ENCODE measurements at regions of chr14 and their contacts with region 1.

Region 1: GRCh38 chr14:32252030-32252670 is 49.1 kb upstream of the RNU6-8 start:
- DNase-seq: peak; percentile 44
- H3K4me3 Mint-ChIP-seq: no peak overlapping the region
- H3K27ac Mint-ChIP-seq: no peak overlapping the region
- H3K4me1 Mint-ChIP-seq: no peaks in the 10 kb centered on the region
- H3K27me3 Mint-ChIP-seq: no peaks in the 10 kb centered on the region

Region 2: DNA sequence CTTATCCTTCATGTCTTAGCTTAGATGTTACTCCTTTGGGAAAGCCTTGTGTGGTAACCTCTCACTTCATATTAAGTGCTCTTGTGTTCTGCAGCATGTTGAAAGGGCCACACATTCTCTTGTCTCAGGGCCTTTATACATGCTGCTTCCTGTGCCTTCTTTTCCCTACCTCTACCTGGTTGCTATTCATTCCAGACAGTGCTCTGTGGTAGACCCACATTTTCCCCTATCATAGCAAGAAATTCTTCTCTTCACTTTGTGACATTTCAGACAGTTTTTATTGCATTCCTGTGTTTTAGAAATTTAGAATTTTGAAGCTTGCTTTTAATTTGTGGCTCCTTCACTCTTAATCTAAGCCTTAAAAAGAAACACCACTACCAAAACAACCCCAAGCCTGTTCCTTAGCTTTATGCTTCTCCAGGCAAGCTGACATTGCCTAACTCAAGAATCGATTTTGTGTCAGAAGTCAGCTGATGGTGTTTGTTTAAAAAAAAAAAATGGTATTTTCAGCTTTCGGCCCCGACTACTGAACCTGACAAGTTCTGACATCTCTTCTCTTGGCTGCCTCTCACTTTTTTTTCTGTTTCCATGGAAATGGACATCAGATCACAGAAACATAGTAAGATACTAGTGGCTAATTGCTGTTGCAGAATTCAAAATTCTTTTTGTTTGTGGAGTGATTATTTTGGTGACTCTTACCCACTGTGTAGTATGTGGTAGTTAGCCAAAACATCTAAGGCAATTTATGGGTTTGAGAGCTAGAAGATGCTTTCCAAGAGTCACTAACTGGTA is 534.7 kb before region 1 on chr14:
- CTCF ChIA-PET with region 1: no interaction called
- POLR2A ChIA-PET with region 1: no interaction called
- DNase-seq: no peak
- H3K4me3 Mint-ChIP-seq: no peak overlapping the region
- H3K27ac Mint-ChIP-seq: no peak overlapping the region
- H3K4me1 Mint-ChIP-seq: no peaks in the 10 kb centered on the region
- H3K27me3 Mint-ChIP-seq: no peaks in the 10 kb centered on the region

Region 3: DNA sequence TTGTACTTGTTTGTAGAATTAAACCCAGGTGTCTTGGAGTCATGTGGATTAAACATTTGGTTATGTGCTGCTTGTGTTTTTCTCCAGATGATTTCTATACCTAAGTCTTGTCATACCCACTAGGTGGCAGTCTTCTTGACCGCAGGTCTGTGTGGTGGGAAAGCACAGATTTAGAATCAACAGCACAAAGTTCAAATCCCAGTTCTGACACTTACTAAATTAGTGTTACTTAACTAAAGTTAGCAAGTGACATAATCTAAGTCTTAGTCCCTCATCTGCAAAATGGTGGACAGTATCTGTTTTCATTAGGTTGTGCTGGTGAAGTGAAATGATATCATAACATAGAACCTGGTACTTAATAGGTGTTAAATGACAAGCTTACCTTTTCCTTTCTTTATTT is 326.0 kb before region 1 on chr14:
- CTCF ChIA-PET with region 1: interaction called, 16 read pairs
- POLR2A ChIA-PET with region 1: no interaction called
- DNase-seq: peak; percentile 32
- H3K4me3 Mint-ChIP-seq: no peak overlapping the region
- H3K27ac Mint-ChIP-seq: no peak overlapping the region
- H3K4me1 Mint-ChIP-seq: peaks cover 15% of the 10 kb centered on the region
- H3K27me3 Mint-ChIP-seq: no peaks in the 10 kb centered on the region

Region 4: DNA sequence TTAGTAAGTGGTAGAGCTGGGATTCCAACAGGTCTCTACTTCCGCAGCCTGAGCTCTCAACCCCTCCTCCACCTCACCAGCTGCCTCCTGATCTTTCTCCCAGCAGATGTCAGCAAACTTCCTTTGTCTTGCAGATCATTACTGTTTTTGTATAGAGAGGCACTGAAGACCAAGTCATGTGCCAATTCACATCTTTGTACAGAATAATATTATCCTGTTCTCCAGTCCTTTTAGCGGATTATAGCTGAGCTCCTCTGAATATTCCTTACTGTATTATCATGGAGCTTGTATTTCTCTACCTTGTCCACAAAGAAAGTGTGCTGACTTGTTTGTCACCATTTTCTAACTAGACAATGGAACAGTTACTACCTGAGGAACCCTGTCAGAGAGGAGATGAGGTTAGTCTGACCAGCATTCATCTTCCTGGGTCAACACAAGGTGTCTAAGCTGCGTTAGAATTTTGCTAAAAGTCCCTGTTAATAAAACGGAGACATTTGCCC is 317.3 kb before region 1 on chr14:
- CTCF ChIA-PET with region 1: interaction called, 10 read pairs
- POLR2A ChIA-PET with region 1: no interaction called
- DNase-seq: no peak
- H3K4me3 Mint-ChIP-seq: no peak overlapping the region
- H3K27ac Mint-ChIP-seq: no peak overlapping the region
- H3K4me1 Mint-ChIP-seq: peaks cover 27% of the 10 kb centered on the region
- H3K27me3 Mint-ChIP-seq: no peaks in the 10 kb centered on the region

Region 5: GRCh38 chr14:32070282-32070681 is 181.9 kb before region 1 on chr14:
- CTCF ChIA-PET with region 1: interaction called, 107 read pairs
- POLR2A ChIA-PET with region 1: no interaction called
- DNase-seq: no peak
- H3K4me3 Mint-ChIP-seq: no peak overlapping the region
- H3K27ac Mint-ChIP-seq: no peak overlapping the region
- H3K4me1 Mint-ChIP-seq: peaks cover 4% of the 10 kb centered on the region
- H3K27me3 Mint-ChIP-seq: peaks cover 14% of the 10 kb centered on the region

Region 6: DNA sequence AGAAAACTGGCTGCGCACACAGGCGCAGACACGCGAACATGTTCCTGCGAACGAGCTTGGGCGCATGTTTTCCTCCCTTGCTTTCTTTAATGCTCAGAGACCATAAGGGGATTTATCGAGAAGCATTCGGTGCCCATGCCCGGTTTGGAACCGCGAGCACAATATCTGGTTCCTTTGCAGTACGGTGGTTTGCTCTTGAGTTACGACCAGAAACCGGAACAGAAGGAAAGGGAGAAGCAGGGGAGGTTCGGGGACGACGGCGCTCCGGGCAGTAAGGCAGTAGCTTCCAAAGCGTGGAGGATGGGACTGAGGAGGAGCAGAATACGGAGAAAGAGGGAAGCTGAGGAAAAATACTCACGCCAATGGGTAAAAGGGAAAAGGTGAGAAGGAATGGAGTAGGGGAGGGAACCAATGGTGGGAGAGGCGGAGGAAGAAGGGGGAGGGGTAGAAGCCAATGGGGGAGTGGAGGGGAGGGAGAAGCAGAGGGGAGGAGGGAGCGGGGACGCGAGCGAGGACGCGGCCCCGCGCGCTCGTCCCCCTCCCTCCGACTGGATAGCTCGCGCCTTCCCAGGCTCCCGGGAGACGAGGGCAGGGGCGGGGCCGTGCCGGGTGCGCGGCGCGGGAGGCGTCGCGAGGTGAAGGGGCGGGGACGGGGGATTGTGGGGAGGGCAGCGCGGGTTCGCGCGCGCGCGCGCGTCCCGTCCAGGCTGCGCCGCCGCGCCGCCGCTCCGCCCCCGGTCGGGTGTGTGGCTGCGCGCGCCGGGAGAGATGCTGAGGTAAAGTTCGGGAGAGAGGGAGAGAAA is 175.7 kb before region 1 on chr14:
- CTCF ChIA-PET with region 1: interaction called, 107 read pairs
- POLR2A ChIA-PET with region 1: no interaction called
- DNase-seq: peak; percentile 84
- H3K4me3 Mint-ChIP-seq: peak overlapping the region; percentile 95
- H3K27ac Mint-ChIP-seq: peak overlapping the region; percentile 72
- H3K4me1 Mint-ChIP-seq: peaks cover 35% of the 10 kb centered on the region
- H3K27me3 Mint-ChIP-seq: peaks cover 18% of the 10 kb centered on the region

Region 7: GRCh38 chr14:32286602-32287001 is 34.5 kb after region 1 on chr14:
- CTCF ChIA-PET with region 1: no interaction called
- POLR2A ChIA-PET with region 1: no interaction called
- DNase-seq: no peak
- H3K4me3 Mint-ChIP-seq: no peak overlapping the region
- H3K27ac Mint-ChIP-seq: no peak overlapping the region
- H3K4me1 Mint-ChIP-seq: no peaks in the 10 kb centered on the region
- H3K27me3 Mint-ChIP-seq: peaks cover 3% of the 10 kb centered on the region

Region 8: GRCh38 chr14:32377046-32377646 is 125.0 kb after region 1 on chr14:
- CTCF ChIA-PET with region 1: no interaction called
- POLR2A ChIA-PET with region 1: no interaction called
- DNase-seq: no peak
- H3K4me3 Mint-ChIP-seq: no peak overlapping the region
- H3K27ac Mint-ChIP-seq: no peak overlapping the region
- H3K4me1 Mint-ChIP-seq: peaks cover 9% of the 10 kb centered on the region
- H3K27me3 Mint-ChIP-seq: no peaks in the 10 kb centered on the region

Region 9: DNA sequence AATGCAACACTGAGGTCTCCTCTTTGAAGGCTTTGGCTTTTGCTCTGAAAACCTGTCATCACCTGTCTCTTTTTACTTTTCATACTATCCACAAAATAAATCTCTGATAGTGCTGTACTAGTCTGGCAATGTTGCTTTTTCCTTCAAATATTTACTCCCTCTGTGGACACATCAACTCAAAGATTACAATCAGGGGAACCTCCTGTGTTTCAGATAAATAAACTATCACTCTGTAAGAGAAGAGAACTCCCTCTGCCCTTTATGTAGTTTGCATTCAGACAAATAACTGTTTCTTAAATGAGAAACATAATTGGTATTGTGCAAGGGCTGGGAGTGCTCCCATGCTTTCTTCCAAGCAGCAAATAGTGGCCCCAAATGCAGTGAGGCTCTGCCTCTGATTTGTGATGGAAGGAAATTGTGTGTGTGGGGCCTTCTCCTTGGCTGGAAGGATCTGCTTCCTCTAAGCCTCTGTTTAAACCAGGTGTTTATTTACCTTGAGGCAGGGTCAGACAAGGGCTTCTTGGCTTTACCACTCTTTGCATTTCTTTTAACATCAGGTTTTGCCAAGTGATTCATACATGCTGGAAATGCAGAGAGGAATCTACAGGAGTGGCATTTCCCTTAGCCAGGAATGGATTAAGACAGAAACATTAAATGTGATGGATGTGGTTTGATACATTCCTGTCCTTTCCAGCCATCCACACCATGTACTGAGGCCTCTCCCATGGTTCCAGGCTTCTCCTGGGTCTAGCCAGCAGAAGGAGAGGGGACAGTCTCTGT is 145.9 kb after region 1 on chr14:
- CTCF ChIA-PET with region 1: no interaction called
- POLR2A ChIA-PET with region 1: no interaction called
- DNase-seq: no peak
- H3K4me3 Mint-ChIP-seq: no peak overlapping the region
- H3K27ac Mint-ChIP-seq: no peak overlapping the region
- H3K4me1 Mint-ChIP-seq: no peaks in the 10 kb centered on the region
- H3K27me3 Mint-ChIP-seq: peaks cover 1% of the 10 kb centered on the region